Left ventricle myocardium superior (tissue), 1 donor: ENCODE measurements at regions of chr10 and their contacts with region 1.

Region 1: DNA sequence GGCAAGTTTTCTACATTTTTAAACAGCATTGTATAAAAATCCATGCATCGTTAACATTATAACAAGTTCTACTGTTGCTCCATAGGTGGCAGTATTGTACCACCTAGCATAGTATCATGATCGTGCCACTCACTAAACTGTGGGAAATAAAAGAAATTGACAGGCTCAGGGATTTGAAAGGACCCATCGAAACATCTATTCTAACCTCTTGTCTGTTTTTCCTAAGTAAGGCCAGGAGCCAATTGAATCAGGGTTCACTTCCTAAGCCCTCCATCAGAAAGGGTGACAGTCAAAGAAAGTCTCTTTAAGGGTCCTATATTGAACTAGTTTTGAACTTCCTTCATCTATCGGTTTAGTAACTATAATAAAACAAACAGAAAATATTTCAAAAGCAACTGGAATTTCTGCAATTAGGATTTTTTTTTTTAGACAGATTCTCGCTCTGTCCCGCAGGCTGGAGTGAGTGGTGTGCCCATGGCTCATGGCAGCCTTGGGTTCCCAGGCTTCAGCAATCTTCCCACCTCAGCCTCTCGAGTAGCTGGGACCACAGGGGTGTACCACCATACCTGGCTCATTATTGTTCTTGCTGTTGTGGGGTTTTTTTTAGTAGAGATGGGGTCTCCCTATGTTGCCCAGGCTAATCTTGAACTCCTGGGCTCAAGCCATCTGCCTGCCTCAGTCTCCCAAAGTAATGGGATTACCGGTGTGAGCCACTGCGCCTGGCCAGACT is 9.4 kb downstream of the HACD1 start:
- DNase-seq: no peak
- ATAC-seq: peak; percentile 80

Region 2: DNA sequence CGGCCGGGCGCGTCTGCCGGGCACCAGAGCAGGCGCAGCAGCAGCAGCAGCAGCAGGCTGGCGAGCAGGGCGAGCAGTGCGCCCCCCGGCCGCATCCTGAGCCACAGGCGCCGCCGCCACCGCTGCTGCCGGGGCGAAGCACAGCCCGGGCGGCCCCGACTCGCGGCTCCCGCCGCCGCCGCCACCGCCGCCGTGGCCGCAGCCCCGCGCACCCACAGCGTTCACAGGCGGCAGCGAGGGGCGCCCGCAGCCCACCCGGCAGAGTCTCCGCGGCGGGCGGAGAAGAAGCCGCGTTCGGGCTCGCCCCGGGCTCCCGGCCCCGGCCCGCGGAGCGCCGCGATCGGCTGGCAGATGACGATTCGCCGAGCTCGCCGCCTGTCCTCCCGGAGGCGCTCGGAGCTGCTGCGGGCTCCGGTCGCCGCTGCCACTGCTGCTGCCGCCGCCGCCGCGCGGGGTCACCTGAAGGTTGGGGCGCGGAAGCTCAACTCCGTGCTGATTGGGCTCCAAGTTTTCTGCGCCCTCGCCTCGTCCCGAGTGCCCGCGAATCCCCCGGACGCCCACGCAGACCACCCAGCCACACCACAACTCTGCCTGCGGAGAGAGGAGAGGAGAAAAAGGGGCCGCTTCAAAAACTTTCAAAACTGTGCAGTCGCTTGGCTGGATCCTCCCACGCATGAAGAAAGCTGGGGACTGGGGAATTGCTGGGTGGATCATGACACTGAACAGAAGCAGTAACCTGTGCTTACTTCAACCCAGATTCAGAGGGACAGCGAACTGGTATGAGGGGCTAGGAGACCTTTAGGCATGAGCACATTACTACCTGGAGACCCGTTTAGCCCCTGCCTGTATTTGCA is 153.4 kb before region 1 on chr10 and contains the start of gene ST8SIA6:
- intact Hi-C with region 1: no loop called
- DNase-seq: peak; percentile 64
- ATAC-seq: peak; percentile 81
- total RNA-seq, gene ST8SIA6: 7.4 TPM

Region 3: GRCh38 chr10:17533731-17534130 is 74.0 kb before region 1 on chr10:
- intact Hi-C with region 1: no loop called
- DNase-seq: no peak
- ATAC-seq: no peak

Region 4: DNA sequence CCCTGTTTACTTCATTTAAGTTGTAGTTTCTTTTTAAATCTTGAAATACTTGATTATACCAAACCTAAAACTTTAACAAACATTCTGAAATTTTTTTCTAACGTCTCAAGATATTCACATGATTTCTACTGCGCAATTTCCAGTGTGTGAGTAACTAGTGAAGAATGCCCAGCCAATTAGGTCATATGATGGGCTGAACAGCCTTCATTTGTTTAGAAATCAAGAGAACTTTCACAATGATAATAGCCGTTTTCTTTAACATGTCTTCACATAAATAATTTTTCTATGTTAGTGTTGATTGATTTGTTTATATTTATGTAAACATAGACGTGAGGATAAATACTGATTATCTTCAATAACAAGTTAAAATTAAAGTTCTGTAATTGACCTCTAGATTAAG is 58.0 kb after region 1 on chr10:
- intact Hi-C with region 1: no loop called
- DNase-seq: no peak
- ATAC-seq: peak; percentile 72

Region 5: DNA sequence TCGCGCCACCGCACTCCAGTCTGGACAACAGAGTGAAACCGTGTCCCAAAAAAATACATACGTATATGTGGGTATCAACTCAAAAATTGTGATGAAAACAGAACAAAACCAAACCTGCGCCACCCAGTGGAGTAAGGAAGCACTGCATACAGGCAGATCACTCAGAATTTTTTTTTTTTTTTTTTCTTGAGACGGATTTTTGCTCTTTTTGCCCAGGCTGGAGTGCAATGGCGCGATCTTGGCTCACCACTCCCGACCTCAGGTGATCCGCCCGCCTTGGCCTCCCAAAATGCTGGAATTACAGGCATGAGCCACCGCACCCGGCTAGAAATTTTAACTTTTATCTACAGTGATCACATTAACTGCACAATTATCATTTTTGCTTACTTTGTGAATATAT is 135.2 kb after region 1 on chr10:
- intact Hi-C with region 1: loop called (anchors 5 kb)
- DNase-seq: peak; percentile 68
- ATAC-seq: no peak